ENCODE measurements at regions of chr13 and their contacts with region 1.

Region 1: GRCh38 chr13:30114571-30115256 is 192.6 kb downstream of the KATNAL1 start:
- DNase-seq: peak; percentile 90
- CTCF ChIP-seq: peak; percentile 87

Region 2: GRCh38 chr13:29508130-29508875 is 606.4 kb before region 1 on chr13:
- in situ Hi-C with region 1: loop called (anchors 25 kb)
- DNase-seq: peak; percentile 92
- CTCF ChIP-seq: peak; percentile 98

Region 3: DNA sequence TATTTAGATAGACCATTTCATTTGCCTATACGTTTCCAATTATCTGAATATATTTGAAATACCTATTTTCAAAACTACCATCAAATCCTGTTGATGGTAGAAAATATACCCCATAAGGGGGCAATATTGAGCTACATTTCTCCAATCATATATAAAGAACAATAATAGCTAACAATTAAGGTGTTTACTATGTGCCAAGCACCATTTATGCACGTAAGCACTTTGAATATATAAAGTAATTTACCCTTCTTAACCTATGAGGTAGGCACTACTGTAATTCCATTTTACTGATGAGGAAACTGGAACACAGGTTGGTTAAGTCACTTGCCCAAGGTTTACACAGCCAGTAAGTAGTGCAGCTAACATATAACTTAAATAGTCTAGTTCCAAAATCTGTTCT is 343.5 kb before region 1 on chr13:
- in situ Hi-C with region 1: loop called (anchors 10 kb)
- DNase-seq: no peak
- CTCF ChIP-seq: peak; percentile 49